ENCODE measurements at regions of chr6 and their contacts with region 1.

Region 1: DNA sequence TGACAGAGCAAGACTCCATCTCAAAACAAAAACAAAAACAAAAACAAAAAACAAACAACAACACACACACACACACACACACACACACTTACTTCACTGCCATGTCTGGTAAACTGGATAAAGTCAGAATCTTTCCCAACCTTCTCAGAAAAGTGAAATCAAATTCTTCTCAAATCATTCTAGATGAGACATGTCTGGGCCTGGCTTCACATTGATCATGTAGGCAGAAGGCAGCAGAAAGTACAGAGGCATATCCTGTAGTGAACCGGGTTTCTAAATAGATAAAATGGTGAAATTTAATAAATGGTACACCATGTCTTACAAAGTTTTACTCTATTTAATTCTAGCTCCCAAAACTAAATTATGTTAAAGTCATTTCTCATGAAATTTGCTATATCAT is 14.9 kb upstream of the MRS2 start:
- DNase-seq: no peak
- H3K4me3 ChIP-seq: no peak overlapping the region
- CTCF ChIP-seq: no peak

Region 2: GRCh38 chr6:24283043-24283985 is 104.5 kb before region 1 on chr6:
- CTCF ChIA-PET with region 1: interaction called, 16 read pairs
- POLR2A ChIA-PET with region 1: no interaction called
- DNase-seq: no peak
- H3K4me3 ChIP-seq: no peak overlapping the region
- CTCF ChIP-seq: peak; percentile 34

Region 3: GRCh38 chr6:25330796-25331685 is 943.2 kb after region 1 on chr6:
- CTCF ChIA-PET with region 1: no interaction called
- POLR2A ChIA-PET with region 1: no interaction called
- DNase-seq: no peak
- H3K4me3 ChIP-seq: no peak overlapping the region
- CTCF ChIP-seq: no peak